Ascending aorta (tissue), 2 donors: ENCODE measurements at regions of chr11 and their contacts with region 1.

Region 1: GRCh38 chr11:84922836-84923235 is 704.3 kb downstream of the DLG2 start:
- DNase-seq: no peak
- H3K4me3 ChIP-seq: peak overlapping the region; percentile 8 to 33
- H3K27ac ChIP-seq: no peak overlapping the region
- H3K4me1 ChIP-seq: no peaks in the 10 kb centered on the region
- H3K27me3 ChIP-seq: no peaks in the 10 kb centered on the region
- CTCF ChIP-seq: no peak

Region 2: DNA sequence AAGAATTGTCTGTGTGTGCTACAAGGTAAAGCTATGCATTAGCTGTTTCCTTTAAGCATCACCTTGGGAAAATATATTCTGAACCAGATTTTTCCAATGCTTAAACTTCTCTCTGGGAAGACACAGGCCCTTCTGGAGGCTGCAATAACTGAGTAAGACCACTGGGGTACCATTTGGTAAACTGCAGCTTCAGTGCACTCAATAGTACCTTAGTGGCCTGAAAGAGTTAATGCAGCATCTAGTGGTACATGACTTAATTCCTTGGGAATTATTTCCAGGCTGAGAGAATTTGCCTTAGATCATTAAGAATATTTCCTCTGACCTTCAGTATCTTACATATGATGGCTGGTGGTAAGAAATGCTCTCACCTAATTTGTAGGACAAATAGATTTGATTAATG is 23.1 kb before region 1 on chr11:
- intact Hi-C with region 1: loop called (anchors 2 kb)
- DNase-seq: no peak
- H3K4me3 ChIP-seq: no peak overlapping the region
- H3K27ac ChIP-seq: no peak overlapping the region
- H3K4me1 ChIP-seq: no peaks in the 10 kb centered on the region
- H3K27me3 ChIP-seq: no peaks in the 10 kb centered on the region
- CTCF ChIP-seq: no peak